Activated naive CD4-positive, alpha-beta T cell treated with anti-CD3 and anti-CD28 coated beads, Interleukin-2, amount 10 ng/mL, durations not matched to agents 7 days and 5 days (primary cell): ENCODE measurements at regions of chr15 and their contacts with region 1.

Region 1: DNA sequence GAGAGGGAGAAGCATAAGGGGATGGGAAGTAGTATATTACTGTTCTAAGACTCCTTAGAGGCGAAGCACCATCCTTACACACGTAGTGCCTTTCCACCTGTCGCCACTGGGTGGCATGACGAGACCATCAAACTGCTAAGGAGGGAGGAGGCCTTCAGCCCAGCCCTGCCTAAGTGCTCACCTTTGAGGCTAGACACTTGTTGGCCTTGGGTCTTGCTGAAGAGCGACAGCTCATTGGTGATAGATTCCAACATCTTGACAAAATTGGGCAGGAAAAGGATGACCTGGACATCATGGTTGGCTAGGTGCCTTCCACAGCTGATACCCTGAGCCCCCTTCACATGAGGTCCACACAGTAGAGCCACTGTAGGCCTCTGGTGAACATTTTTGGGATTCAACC is 19.6 kb downstream of the CLK3 start:
- DNase-seq: peak; percentile 83
- H3K4me3 Mint-ChIP-seq: no peak overlapping the region
- H3K27ac Mint-ChIP-seq: no peak overlapping the region
- H3K4me1 Mint-ChIP-seq: peaks cover 4% of the 10 kb centered on the region
- H3K27me3 Mint-ChIP-seq: no peaks in the 10 kb centered on the region

Region 2: GRCh38 chr15:74251131-74251811 is 384.0 kb before region 1 on chr15:
- CTCF ChIA-PET with region 1: no interaction called
- DNase-seq: no peak
- H3K4me3 Mint-ChIP-seq: no peak overlapping the region
- H3K27ac Mint-ChIP-seq: no peak overlapping the region
- H3K4me1 Mint-ChIP-seq: no peaks in the 10 kb centered on the region
- H3K27me3 Mint-ChIP-seq: peaks cover 29% of the 10 kb centered on the region

Region 3: GRCh38 chr15:74373731-74374647 is 261.2 kb before region 1 on chr15:
- CTCF ChIA-PET with region 1: interaction called, 81 read pairs
- DNase-seq: peak; percentile 98
- H3K4me3 Mint-ChIP-seq: peak overlapping the region; percentile 81
- H3K27ac Mint-ChIP-seq: peak overlapping the region; percentile 84
- H3K4me1 Mint-ChIP-seq: peaks cover 22% of the 10 kb centered on the region
- H3K27me3 Mint-ChIP-seq: peaks cover 44% of the 10 kb centered on the region

Region 4: GRCh38 chr15:74615508-74616365 is 19.5 kb before region 1 on chr15 and contains the start of gene CLK3:
- CTCF ChIA-PET with region 1: interaction called, 197 read pairs
- DNase-seq: peak; percentile 97
- H3K4me3 Mint-ChIP-seq: peak within 1 kb of the TSS; percentile 93
- H3K27ac Mint-ChIP-seq: peak within 1 kb of the TSS; percentile 99
- H3K4me1 Mint-ChIP-seq: peaks cover 49% of the 10 kb centered on the region
- H3K27me3 Mint-ChIP-seq: peaks cover 25% of the 10 kb centered on the region

Region 5: GRCh38 chr15:74667973-74668372 is 32.7 kb after region 1 on chr15:
- CTCF ChIA-PET with region 1: no interaction called
- DNase-seq: no peak
- H3K4me3 Mint-ChIP-seq: no peak overlapping the region
- H3K27ac Mint-ChIP-seq: no peak overlapping the region
- H3K4me1 Mint-ChIP-seq: no peaks in the 10 kb centered on the region
- H3K27me3 Mint-ChIP-seq: no peaks in the 10 kb centered on the region

Region 6: DNA sequence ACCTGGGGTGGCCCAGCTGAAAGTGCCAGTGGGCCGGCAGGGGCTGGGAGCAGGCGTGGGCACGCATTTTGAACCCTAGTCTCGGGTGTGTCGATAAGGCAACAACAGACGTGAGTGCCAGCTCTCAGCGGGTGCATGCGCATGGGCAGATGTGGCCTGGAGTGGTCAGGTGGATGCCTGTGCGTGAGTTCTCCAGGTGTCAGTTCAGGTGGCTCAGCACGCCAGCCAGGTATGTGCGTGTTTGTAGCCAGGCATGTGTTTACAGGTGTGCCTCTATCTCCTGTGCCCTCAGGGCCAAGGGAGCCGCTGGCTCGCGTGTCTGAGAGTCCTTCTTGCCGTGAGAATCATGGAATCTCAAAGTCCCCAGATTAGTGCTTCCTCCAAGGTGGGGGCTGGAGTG is 128.2 kb after region 1 on chr15:
- CTCF ChIA-PET with region 1: interaction called, 347 read pairs
- DNase-seq: no peak
- H3K4me3 Mint-ChIP-seq: no peak overlapping the region
- H3K27ac Mint-ChIP-seq: no peak overlapping the region
- H3K4me1 Mint-ChIP-seq: peaks cover 17% of the 10 kb centered on the region
- H3K27me3 Mint-ChIP-seq: peaks cover 34% of the 10 kb centered on the region

Region 7: GRCh38 chr15:74799856-74800547 is 164.8 kb after region 1 on chr15:
- CTCF ChIA-PET with region 1: interaction called, 13 read pairs
- DNase-seq: peak; percentile 89
- H3K4me3 Mint-ChIP-seq: no peak overlapping the region
- H3K27ac Mint-ChIP-seq: peak overlapping the region; percentile 81
- H3K4me1 Mint-ChIP-seq: peaks cover 58% of the 10 kb centered on the region
- H3K27me3 Mint-ChIP-seq: no peaks in the 10 kb centered on the region

Region 8: GRCh38 chr15:74950078-74951000 is 315.1 kb after region 1 on chr15:
- CTCF ChIA-PET with region 1: interaction called, 26 read pairs
- DNase-seq: peak; percentile 88
- H3K4me3 Mint-ChIP-seq: no peak overlapping the region
- H3K27ac Mint-ChIP-seq: no peak overlapping the region
- H3K4me1 Mint-ChIP-seq: peaks cover 15% of the 10 kb centered on the region
- H3K27me3 Mint-ChIP-seq: peaks cover 29% of the 10 kb centered on the region